Tibial artery (tissue), 4 donors: ENCODE measurements at regions of chr1 and their contacts with region 1.

Region 1: DNA sequence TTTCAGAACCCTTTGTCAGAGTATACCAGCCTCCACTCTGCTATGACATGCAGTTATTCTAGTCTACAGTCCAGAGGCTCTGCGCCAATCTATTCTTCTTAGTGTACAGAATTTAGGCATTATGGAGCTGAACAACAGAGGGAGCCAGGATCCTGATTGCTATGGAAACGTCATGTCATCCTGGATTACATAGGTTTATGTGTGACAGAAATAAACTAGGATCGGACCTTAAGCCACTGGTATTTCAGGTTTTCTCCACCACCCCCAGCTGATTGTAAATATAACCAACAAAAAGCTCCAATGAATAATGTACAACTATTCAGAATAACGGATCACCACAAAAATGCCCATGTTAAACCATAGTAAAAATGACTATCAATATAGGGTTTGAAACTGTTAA is 48.1 kb upstream of the EEIG2 start:
- DNase-seq: no peak
- H3K4me3 ChIP-seq: no peak overlapping the region
- H3K27ac ChIP-seq: no peak overlapping the region
- H3K4me1 ChIP-seq: no peaks in the 10 kb centered on the region
- H3K27me3 ChIP-seq: no peaks in the 10 kb centered on the region
- CTCF ChIP-seq: no peak

Region 2: GRCh38 chr1:108600504-108600903 is 88.7 kb after region 1 on chr1:
- intact Hi-C with region 1: no loop called
- DNase-seq: no peak
- H3K4me3 ChIP-seq: no peak overlapping the region
- H3K27ac ChIP-seq: no peak overlapping the region
- H3K4me1 ChIP-seq: peaks cover 0 to 12% (median 6%) of the 10 kb centered on the region in 4 donors
- H3K27me3 ChIP-seq: no peaks in the 10 kb centered on the region
- CTCF ChIP-seq: no peak

Region 3: DNA sequence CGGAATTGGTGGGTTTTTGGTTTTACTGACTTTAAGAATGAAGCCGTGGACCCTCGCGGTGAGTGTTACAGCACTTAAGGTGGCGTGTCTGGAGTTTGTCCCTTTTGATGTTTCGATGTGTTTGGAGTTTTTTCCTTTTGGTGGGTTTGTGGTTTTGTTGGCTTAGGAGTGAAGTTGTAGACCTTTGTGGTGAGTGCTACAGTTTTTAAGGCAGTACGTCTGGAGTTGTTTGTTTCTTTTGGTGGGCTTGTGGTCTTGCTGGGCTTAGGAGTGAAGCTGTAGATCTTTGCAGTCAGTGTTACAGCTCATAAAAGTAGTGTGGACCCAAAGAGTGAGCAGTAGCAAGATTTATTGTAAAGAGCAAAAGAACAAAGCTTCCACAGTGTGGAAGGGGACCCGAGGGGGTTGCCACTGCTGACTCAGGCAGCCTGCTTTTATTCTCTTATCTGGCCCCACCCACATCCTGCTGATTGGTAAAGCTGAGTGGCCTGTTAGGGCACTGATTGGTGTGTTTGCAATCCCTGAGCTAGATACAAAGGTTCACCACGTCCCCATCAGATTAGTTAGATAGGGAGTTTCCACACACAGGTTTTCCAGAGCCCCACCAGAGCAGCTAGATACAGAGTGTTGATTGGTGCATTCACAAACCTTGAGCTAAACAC is 128.2 kb after region 1 on chr1:
- intact Hi-C with region 1: loop called (anchors 2 kb)
- DNase-seq: no peak
- H3K4me3 ChIP-seq: no peak overlapping the region
- H3K27ac ChIP-seq: no peak overlapping the region
- H3K4me1 ChIP-seq: no peaks in the 10 kb centered on the region
- H3K27me3 ChIP-seq: no peaks in the 10 kb centered on the region
- CTCF ChIP-seq: no peak

Region 4: DNA sequence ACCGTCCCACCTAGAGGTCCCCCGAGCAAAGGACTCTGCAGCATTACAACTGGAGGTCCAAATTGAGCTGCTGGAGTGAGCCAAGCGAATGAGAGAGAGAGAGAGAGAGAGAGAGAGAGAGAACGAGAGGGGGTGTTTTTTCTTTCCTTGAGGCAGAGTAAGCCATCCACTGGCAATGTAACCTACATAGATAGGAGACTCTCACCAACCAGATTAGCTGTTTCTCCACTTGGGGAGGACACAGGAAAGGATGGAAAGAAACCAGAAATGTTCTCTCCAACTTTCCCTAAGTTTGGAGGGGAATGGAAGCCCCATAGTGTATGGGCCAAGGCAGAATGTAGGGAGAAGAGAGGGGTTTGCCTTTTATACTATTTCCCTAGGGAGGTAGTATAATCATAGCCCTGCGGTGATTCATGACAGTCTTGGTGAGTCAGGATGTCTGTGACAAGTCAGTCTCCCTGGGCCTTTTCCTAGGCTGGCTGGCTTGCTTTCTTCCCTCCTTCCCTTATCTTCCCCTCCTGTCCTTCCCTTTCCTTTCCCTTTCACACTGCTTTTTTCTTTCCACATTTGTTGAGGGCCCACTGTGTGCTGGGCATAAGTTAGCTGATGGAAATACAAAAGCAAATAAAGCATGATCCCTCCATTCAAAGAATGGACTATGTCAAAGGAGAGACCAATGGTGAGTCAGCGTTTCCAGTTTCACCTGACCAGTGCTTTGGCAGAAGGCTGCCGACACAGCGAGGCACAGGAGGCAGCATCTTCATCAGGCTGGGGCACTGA is 208.0 kb after region 1 on chr1:
- intact Hi-C with region 1: no loop called
- DNase-seq: no peak
- H3K4me3 ChIP-seq: no peak overlapping the region
- H3K27ac ChIP-seq: peak overlapping the region; percentile 59 to 62
- H3K4me1 ChIP-seq: peaks cover 0 to 44% (median 4%) of the 10 kb centered on the region in 4 donors
- H3K27me3 ChIP-seq: no peaks in the 10 kb centered on the region
- CTCF ChIP-seq: no peak